ENCODE measurements at regions of chr14 and their contacts with region 1.

Region 1: GRCh38 chr14:105314287-105315200 is at the start of gene PACS2:
- DNase-seq: peak; percentile 63
- ATAC-seq: peak; percentile 72
- H3K4me3 Mint-ChIP-seq: peak within 1 kb of the TSS; percentile 84
- H3K27ac Mint-ChIP-seq: no peak within 1 kb of the TSS
- H3K4me1 Mint-ChIP-seq: peaks cover 17% of the 10 kb centered on the region
- H3K27me3 Mint-ChIP-seq: no peaks in the 10 kb centered on the region; the same call in 1 of the 2 replicates
- CTCF ChIP-seq: no peak
- total RNA-seq, gene PACS2: 90.7 to 100 TPM (median 98.0 TPM) in 3 replicates

Region 2: DNA sequence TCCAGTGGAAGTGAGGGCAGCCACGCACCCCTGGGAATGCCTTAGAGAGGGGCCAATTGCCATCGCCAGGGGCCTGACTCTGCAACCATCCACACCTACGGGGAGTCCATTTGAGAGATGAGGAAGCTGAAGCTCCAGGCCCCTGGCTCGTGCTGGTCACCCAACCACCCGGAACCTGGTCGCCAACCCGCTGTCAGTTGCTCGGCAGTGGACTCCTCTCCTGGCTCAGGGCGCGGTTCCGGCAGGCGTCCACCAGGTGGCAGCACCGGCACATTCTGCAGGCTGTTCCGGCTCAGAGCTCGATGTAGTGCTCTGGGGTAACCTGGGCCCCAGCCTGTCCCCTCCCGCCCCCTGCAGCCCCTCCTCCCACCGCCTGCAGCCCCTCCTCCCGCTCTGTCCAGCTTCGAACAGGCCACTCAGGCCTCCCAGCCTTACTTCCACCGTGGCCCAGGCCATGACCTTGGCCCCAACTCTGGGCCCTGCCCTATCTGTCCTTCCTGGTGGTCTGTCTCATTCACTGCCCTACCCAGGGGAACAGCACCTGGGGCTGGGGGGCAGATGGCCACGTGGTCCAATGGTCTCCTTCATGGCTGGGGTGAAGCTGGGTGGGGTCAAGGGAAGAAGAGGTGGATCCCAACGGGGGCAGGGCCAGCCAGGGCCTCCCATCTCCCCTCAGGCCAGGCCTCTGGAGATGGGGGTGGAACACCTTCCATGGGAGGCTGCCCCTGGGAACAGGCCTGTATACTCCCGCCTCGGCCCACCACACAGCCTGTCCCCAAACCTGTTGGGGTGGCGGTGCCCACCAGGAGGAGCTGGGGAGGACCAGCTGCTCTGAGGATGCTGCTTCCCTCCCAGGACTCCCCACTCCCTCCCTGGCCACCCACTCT is 545.9 kb before region 1 on chr14:
- CTCF ChIA-PET with region 1: no interaction called
- POLR2A ChIA-PET with region 1: no interaction called
- DNase-seq: peak; percentile 99
- ATAC-seq: peak; percentile 86
- H3K4me3 Mint-ChIP-seq: peak overlapping the region; percentile 56
- H3K27ac Mint-ChIP-seq: peak overlapping the region; percentile 81
- H3K4me1 Mint-ChIP-seq: peaks cover 17% of the 10 kb centered on the region
- H3K27me3 Mint-ChIP-seq: no peaks in the 10 kb centered on the region; the same call in 1 of the 2 replicates
- CTCF ChIP-seq: peak; percentile 90

Region 3: DNA sequence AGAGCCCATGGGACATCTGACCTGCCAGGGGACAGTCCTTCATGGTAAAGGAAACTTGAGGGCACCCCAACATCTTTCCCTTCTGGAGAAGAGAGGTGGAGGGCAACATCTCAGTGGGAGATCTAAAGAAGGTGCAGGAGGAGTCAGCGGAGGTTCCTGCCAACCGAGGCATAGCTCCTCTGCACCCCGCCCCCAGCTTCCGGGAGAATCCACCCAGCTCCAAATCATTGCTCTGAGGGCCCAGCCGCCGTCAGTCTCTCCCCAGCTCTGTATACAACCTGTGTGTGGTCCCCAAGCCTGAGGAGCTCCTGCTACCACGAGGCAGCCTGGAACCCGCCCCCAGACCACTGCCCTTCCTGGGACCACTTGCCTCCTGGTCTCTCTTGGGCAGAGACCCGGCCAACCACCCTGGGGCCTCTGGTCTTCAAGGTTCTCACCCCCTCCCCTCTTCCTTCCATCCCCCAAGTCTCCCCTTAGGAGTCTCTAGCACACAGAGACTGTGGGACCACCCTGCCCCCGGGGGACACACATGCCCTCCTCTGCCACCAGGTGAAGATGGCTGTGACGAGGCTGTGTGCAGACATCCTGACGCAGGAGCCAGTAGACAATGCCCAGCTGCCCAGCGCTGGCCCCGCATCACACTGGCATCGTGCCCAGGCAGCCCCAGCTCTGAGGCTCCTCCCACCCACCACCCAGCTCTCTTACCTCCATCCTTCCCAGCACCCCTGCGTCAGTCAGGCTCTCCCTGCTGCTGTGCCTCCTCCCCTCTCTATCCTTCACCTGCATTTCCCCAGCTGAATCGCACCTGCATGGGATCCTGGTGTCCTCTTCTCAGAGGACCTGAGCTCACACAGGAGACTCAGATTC is 120.4 kb before region 1 on chr14:
- CTCF ChIA-PET with region 1: no interaction called
- POLR2A ChIA-PET with region 1: no interaction called
- DNase-seq: no peak
- ATAC-seq: no peak
- H3K4me3 Mint-ChIP-seq: no peak overlapping the region
- H3K27ac Mint-ChIP-seq: no peak overlapping the region
- H3K4me1 Mint-ChIP-seq: peaks cover 15% of the 10 kb centered on the region
- H3K27me3 Mint-ChIP-seq: peaks cover 25% of the 10 kb centered on the region
- CTCF ChIP-seq: no peak

Region 4: DNA sequence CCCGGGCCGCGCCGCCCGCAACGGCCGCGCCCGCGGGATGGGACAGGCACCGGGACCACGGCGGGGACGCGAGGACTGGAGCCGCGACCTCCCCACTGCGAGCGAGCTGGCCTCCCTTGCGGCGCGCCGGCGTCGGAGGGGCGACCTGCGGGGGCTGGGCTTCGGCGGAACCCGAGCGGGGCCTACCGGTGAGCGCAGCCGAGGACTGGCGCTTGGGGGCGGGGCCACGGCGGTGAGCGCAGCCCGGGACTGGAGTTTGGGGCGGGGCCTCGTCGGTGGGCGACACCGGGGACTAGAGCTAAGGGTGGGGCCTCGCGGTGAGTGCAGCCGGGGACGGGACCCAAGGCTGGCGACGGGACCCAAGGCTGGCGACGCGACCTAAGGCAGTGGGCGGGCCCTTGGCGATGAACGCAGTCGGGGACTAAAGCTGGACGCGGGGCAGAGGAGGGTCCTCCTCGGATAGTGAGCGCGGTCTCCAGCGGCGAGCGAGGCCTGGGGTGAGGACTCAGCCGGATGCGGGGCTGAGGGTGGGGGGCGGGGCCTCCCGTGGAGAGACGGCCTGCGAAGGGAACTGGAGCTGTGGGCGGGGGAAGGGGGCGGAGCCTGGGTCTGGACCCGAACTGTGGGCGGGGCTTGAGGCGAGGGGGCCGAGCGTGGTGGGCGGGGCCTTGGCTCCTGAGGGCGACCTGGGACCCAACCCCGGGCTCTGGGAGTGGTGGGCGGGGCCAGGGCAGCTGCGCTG is 13.6 kb before region 1 on chr14 and contains the start of gene BRF1:
- CTCF ChIA-PET with region 1: interaction called, 12 read pairs
- POLR2A ChIA-PET with region 1: interaction called, 7 read pairs
- DNase-seq: peak; percentile 100
- ATAC-seq: peak; percentile 89
- H3K4me3 Mint-ChIP-seq: peak within 1 kb of the TSS; percentile 91
- H3K27ac Mint-ChIP-seq: peak within 1 kb of the TSS; percentile 98
- H3K4me1 Mint-ChIP-seq: peaks cover 13% of the 10 kb centered on the region
- H3K27me3 Mint-ChIP-seq: peaks cover 40% of the 10 kb centered on the region
- CTCF ChIP-seq: no peak
- total RNA-seq, gene BRF1: 23.9 to 26.5 TPM (median 26.4 TPM) in 3 replicates

Region 5: DNA sequence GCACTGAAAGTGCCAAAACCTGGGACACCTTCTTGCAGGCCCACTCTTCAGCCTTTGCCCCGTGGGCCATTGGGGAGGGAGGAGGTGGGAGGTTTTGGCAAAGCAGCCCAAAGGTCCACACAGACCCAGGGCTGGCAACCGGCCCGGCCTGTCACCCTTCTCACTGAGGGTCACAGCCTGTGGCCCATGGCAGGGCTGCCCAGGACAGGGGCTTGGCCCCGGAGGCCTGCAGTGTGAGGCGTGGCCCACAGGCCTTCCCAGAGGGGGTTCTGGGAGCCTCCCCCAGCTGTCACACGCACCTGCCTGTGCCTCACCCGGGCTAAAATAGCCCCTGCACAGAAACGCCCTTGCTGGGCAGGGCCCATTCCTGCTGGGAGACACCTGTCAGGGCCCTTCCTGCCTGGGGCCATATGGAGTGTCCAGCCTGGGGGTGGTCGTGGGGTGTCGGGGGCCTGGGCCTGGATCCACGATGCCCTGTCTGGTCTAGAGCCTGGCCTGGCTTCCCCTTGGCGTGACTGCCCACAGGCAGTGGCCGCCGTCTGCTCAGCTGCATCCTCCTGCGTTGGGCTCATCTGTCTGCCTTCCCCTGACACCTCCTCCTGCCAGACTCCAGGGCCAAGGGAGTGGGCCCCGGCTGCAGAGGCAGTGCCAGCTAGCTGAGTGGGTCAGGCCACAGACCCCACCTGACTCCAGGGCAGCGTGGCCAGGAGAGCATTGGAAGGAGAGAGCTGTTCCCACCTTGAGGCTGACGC is 19.2 kb after region 1 on chr14:
- CTCF ChIA-PET with region 1: interaction called, 12 read pairs
- POLR2A ChIA-PET with region 1: interaction called, 9 read pairs
- DNase-seq: no peak
- ATAC-seq: no peak
- H3K4me3 Mint-ChIP-seq: no peak overlapping the region
- H3K27ac Mint-ChIP-seq: no peak overlapping the region
- H3K4me1 Mint-ChIP-seq: peaks cover 23% of the 10 kb centered on the region
- H3K27me3 Mint-ChIP-seq: no peaks in the 10 kb centered on the region
- CTCF ChIP-seq: no peak

Region 6: GRCh38 chr14:105375635-105376057 is 61.1 kb after region 1 on chr14:
- CTCF ChIA-PET with region 1: no interaction called
- POLR2A ChIA-PET with region 1: no interaction called
- DNase-seq: no peak
- ATAC-seq: no peak
- H3K4me3 Mint-ChIP-seq: no peak overlapping the region
- H3K27ac Mint-ChIP-seq: no peak overlapping the region
- H3K4me1 Mint-ChIP-seq: peaks cover 11% of the 10 kb centered on the region
- H3K27me3 Mint-ChIP-seq: peaks cover 15% of the 10 kb centered on the region
- CTCF ChIP-seq: no peak

Measured in WTC11 (cell line).